ENCODE measurements at regions of chr1 and their contacts with region 1.

Region 1: DNA sequence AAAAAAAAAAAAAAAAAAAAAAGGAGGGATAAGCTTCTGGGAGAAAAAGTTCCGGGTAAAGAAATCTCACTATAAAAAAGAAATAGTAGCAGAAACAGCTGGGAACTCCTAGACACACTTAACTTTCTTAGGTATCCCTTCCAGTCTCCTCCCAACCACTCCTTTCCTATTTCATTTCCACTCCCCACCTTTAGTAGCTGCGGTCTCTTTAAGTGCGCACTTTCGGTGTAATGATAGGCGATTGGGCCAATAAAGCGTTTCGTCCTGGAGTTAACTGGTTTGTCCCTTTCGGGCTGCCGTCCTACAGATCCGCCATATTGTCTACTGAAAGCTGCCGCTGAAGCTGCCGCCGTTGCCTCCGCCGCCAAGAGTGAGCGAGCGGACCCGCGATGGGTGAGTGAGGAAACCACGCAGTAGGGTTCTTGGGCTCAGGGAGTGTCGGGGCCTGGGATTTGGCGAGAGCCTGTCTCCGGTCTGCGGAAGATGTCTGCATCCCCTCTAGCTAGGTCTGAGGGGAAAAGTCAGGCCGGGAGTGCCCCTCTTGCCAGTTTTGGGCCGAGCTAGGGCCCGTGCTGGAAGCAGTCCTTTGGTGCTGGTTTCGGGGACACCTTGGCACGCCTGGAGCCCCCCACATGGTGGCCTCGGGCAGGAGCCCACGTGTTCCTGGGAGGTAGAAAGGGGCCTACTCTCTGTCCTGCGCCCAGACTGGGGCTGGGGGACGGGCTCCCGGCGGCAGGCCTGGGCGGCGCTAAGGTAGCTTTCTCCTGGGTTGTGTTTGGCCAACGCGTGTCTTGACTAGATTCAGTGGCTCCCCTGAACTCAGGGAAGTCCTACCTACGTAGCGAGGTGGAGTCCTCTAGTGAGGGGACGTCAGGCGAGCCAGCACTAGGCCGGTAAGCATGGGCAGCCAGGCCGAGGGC is at the start of gene KPNA6:
- H3K4me3 Mint-ChIP-seq: peak within 1 kb of the TSS; percentile 98
- H3K27ac Mint-ChIP-seq: peak within 1 kb of the TSS; percentile 93
- H3K4me1 Mint-ChIP-seq: peaks cover 34% of the 10 kb centered on the region
- H3K27me3 Mint-ChIP-seq: no peaks in the 10 kb centered on the region

Region 2: DNA sequence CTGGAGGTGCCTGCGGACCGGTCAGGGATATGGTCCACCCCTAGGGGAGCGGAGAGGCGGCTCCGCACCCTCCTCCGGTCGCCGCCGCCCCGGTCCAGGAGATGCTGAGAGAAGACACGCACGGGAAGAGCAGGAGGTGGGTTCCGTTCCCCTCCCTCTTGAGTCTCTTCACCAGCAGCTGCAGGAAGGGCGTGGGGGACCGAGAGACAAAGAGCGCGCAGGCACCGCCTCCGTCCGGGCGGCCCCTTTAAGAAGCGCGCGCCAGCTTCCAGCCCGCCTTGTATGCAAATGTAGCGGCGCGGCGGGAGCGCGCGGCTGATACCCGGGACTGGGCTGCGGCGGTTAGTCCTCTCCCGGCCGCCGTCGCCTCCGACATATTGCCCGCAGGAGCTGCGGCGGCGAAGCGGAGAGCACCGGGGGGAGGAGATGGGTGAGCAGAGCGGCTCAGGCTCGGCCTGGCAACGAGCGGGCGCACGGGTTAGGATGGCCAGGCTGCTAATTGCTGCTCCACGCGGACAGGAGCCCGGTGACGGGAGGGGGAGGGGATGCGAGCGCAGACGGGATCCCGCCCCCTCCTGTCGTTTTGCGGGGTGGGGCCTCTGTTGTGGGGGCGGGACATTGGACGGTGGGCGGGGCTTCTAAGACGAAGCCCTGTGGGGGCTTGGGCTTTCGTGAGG is 35.2 kb before region 1 on chr1 and contains the start of gene TMEM39B:
- intact Hi-C with region 1: loop called (anchors 5 kb)
- H3K4me3 Mint-ChIP-seq: peak within 1 kb of the TSS; percentile 86
- H3K27ac Mint-ChIP-seq: peak within 1 kb of the TSS; percentile 93
- H3K4me1 Mint-ChIP-seq: peaks cover 56% of the 10 kb centered on the region
- H3K27me3 Mint-ChIP-seq: peaks cover 5% of the 10 kb centered on the region

Region 3: GRCh38 chr1:32179443-32180185 is 71.6 kb after region 1 on chr1 and contains the start of gene TXLNA:
- intact Hi-C with region 1: loop called (anchors 2 kb)
- H3K4me3 Mint-ChIP-seq: peak within 1 kb of the TSS; percentile 90
- H3K27ac Mint-ChIP-seq: peak within 1 kb of the TSS; percentile 99
- H3K4me1 Mint-ChIP-seq: peaks cover 47% of the 10 kb centered on the region
- H3K27me3 Mint-ChIP-seq: no peaks in the 10 kb centered on the region

Measured in dendritic cell treated with granulocyte-macrophage colony-stimulating factor and Interleukin-4, amounts not matched to agents 40 ng/mL and 50 ng/mL, for 4 days (primary cell).